ENCODE measurements at regions of chr6 and their contacts with region 1.

Region 1: DNA sequence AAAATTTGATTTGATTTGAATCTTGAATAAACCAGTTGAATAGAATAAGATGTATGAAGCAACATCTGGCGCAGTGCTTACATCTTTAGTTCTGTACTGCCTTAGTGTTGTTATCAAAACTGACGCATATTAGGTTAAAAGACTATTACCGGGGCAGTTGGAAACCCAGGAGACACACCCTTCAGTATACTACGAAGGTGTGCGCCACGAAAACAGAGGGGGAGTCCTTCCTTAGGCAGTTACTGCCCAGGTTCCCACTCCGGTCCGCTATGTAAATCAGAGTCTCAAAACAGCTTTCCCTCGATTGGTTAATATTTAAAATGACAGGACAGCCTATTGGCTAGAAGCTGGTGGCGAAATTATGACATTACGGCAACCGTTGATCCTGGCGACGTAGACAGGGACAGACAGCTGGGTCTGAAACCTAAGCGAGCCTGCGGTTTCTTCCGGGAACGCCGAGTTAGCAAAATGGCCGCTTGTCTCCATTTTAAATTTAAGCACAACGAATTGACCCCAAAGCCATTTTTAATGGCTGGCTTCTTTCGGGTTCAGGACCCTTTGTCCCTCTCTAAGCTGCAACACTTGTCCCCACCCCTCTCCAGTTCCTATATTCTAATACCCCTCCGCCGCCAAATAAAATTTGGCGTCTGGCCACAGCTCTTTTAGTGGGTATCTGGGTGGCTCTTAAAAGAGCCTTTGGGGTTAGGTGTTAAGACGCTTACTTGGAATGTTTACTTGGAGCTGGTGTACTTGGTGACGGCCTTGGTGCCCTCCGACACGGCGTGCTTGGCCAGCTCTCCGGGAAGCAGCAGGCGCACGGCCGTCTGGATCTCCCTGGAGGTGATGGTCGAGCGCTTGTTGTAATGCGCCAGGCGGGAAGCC is 35.8 kb downstream of the HFE start:
- DNase-seq: peak; percentile 97
- H3K4me3 Mint-ChIP-seq: peak overlapping the region; percentile 96
- H3K27ac Mint-ChIP-seq: peak overlapping the region; percentile 99
- H3K4me1 Mint-ChIP-seq: peaks cover 44% of the 10 kb centered on the region
- H3K27me3 Mint-ChIP-seq: peaks cover 5% of the 10 kb centered on the region

Region 2: DNA sequence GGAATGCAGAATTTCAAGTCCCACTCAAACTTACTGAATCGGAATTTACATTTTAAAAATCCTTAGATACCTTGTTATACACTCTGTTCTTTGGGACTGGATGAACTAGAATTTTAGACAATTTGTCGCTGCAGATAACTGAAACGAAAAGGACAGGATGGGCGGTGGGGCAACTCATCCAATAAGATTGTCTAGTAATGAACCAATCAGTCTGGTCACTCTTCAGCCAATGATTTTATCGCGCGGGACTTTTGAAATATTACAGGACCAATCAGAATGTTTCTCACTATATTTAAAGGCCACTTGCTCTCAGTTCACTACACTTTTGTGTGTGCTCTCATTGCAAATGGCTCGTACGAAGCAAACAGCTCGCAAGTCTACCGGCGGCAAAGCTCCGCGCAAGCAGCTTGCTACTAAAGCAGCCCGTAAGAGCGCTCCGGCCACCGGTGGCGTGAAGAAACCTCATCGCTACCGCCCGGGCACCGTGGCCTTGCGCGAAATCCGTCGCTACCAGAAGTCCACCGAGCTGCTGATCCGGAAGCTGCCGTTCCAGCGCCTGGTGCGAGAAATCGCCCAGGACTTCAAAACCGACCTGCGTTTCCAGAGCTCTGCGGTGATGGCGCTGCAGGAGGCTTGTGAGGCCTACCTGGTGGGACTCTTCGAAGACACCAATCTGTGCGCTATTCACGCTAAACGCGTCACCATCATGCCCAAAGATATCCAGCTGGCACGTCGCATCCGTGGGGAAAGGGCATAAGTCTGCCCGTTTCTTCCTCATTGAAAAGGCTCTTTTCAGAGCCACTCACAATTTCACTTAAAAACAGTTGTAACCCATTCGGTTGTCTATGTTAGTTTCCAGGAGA is 77.7 kb before region 1 on chr6:
- intact Hi-C with region 1: loop called (anchors 1 kb)
- DNase-seq: peak; percentile 96
- H3K4me3 Mint-ChIP-seq: peak overlapping the region; percentile 86
- H3K27ac Mint-ChIP-seq: peak overlapping the region; percentile 99
- H3K4me1 Mint-ChIP-seq: peaks cover 33% of the 10 kb centered on the region
- H3K27me3 Mint-ChIP-seq: no peaks in the 10 kb centered on the region

Region 3: GRCh38 chr6:26071135-26071534 is 51.9 kb before region 1 on chr6:
- intact Hi-C with region 1: no loop called
- DNase-seq: no peak
- H3K4me3 Mint-ChIP-seq: no peak overlapping the region
- H3K27ac Mint-ChIP-seq: no peak overlapping the region
- H3K4me1 Mint-ChIP-seq: no peaks in the 10 kb centered on the region
- H3K27me3 Mint-ChIP-seq: peaks cover 28% of the 10 kb centered on the region

Region 4: DNA sequence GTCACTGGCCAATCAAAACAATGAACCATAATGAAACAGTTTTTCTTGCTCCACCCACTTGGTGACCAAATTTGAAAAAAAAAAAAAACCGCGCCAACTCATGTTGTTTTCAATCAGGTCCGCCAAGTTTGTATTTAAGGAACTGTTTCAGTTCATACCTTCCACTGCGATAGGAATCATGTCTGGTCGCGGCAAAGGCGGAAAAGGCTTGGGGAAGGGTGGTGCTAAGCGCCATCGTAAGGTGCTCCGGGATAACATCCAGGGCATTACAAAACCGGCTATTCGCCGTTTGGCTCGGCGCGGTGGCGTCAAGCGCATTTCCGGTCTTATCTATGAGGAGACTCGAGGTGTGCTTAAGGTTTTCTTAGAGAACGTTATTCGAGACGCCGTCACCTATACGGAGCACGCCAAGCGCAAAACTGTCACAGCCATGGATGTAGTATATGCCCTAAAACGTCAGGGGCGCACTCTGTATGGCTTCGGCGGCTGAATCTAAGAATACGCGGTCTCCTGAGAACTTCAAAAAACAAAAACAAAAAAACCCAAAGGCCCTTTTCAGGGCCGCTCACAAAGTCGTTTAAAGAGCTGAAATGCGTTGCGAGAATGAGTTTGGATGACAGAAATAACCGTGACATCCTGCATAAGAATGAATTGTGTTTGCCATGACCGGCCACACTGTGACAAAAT is 19.1 kb before region 1 on chr6:
- intact Hi-C with region 1: loop called (anchors 1 kb)
- DNase-seq: peak; percentile 97
- H3K4me3 Mint-ChIP-seq: peak overlapping the region; percentile 85
- H3K27ac Mint-ChIP-seq: peak overlapping the region; percentile 94
- H3K4me1 Mint-ChIP-seq: peaks cover 19% of the 10 kb centered on the region
- H3K27me3 Mint-ChIP-seq: peaks cover 5% of the 10 kb centered on the region

Region 5: DNA sequence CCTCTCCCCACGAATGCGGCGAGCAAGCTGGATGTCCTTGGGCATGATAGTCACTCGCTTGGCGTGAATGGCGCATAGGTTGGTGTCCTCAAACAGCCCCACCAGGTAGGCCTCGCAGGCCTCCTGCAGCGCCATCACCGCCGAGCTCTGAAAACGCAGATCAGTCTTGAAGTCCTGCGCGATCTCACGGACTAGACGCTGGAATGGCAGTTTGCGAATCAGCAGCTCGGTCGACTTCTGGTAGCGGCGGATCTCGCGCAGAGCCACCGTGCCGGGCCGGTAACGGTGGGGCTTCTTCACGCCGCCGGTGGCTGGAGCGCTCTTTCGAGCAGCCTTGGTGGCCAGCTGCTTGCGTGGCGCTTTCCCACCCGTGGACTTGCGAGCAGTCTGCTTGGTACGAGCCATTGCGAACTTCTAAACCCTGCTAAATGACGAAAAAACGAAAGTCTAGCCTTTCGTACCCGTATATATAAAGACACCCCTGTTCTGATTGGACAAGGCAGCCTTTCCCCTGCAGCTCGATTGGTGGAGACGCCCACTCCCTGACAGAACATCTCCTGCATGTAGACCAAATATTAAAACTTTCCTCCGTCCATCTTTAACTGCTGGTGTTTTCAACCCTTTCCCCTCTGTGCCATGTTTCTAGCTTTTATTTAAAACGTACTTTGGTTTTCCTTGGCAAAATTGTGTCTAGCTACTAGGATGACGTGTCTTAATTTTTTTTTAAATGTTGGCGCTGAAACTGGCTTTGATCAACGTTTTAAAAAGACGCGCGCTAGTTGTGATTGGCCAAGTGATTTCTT is 74.0 kb after region 1 on chr6:
- intact Hi-C with region 1: loop called (anchors 2 kb)
- DNase-seq: peak; percentile 96
- H3K4me3 Mint-ChIP-seq: peak overlapping the region; percentile 87
- H3K27ac Mint-ChIP-seq: peak overlapping the region; percentile 93
- H3K4me1 Mint-ChIP-seq: peaks cover 57% of the 10 kb centered on the region
- H3K27me3 Mint-ChIP-seq: no peaks in the 10 kb centered on the region

Region 6: GRCh38 chr6:26285143-26286134 is 162.4 kb after region 1 on chr6:
- intact Hi-C with region 1: loop called (anchors 1 kb)
- DNase-seq: peak; percentile 99
- H3K4me3 Mint-ChIP-seq: peak overlapping the region; percentile 87
- H3K27ac Mint-ChIP-seq: peak overlapping the region; percentile 96
- H3K4me1 Mint-ChIP-seq: peaks cover 45% of the 10 kb centered on the region
- H3K27me3 Mint-ChIP-seq: peaks cover 7% of the 10 kb centered on the region

Region 7: GRCh38 chr6:27864906-27865849 is 1742.1 kb after region 1 on chr6:
- intact Hi-C with region 1: loop called (anchors 2 kb)
- DNase-seq: peak; percentile 95
- H3K4me3 Mint-ChIP-seq: peak overlapping the region; percentile 97
- H3K27ac Mint-ChIP-seq: peak overlapping the region; percentile 100
- H3K4me1 Mint-ChIP-seq: peaks cover 58% of the 10 kb centered on the region
- H3K27me3 Mint-ChIP-seq: peaks cover 2% of the 10 kb centered on the region